ENCODE measurements at regions of chr1 and their contacts with region 1.

Region 1: GRCh38 chr1:209860293-209860881 is 32.6 kb downstream of the UTP25 start:
- DNase-seq: no peak
- H3K4me3 ChIP-seq: no peak overlapping the region
- H3K27ac ChIP-seq: no peak overlapping the region
- H3K27me3 ChIP-seq: no peaks in the 10 kb centered on the region
- CTCF ChIP-seq: peak; percentile 93

Region 2: GRCh38 chr1:209875515-209875914 is 15.1 kb after region 1 on chr1:
- CTCF ChIA-PET with region 1: interaction called, 39 read pairs
- POLR2A ChIA-PET with region 1: no interaction called
- DNase-seq: no peak
- H3K4me3 ChIP-seq: no peak overlapping the region
- H3K27ac ChIP-seq: peak overlapping the region; percentile 41
- H3K27me3 ChIP-seq: no peaks in the 10 kb centered on the region
- CTCF ChIP-seq: peak; percentile 70

Region 3: GRCh38 chr1:209937996-209938959 is 77.9 kb after region 1 on chr1 and contains the start of gene SYT14:
- CTCF ChIA-PET with region 1: interaction called, 13 read pairs
- POLR2A ChIA-PET with region 1: interaction called, 3 read pairs
- DNase-seq: no peak
- H3K4me3 ChIP-seq: peak within 1 kb of the TSS; percentile 72
- H3K27ac ChIP-seq: peak within 1 kb of the TSS; percentile 55
- H3K27me3 ChIP-seq: no peaks in the 10 kb centered on the region
- CTCF ChIP-seq: no peak; the same call in 1 of the 2 replicates
- polyA plus RNA-seq, gene SYT14: 3.7 and 4.8 TPM in 2 replicates

Region 4: DNA sequence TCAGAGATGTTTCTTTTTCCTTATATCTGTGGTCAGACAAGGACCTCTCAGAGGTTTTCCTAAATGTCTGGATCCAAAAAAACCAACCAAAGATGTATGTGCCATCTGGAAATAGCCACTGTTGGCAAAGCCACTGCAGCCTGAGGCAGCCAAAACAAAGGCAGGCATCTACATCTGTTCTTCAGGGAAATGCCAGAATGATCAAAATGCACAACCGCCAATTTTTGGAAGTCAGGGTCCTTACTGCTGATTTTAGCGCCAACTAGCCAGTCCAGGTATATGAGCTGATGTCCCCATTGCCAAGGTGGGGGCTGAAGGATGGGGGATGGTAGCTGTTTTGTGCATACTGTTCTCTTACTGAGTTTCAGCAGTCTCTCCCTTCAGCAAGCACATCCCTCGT is 123.6 kb after region 1 on chr1:
- CTCF ChIA-PET with region 1: interaction called, 253 read pairs
- POLR2A ChIA-PET with region 1: no interaction called
- DNase-seq: no peak
- H3K4me3 ChIP-seq: no peak overlapping the region
- H3K27ac ChIP-seq: no peak overlapping the region
- H3K27me3 ChIP-seq: no peaks in the 10 kb centered on the region
- CTCF ChIP-seq: no peak

Region 5: GRCh38 chr1:209989525-209989924 is 129.1 kb after region 1 on chr1:
- CTCF ChIA-PET with region 1: interaction called, 253 read pairs
- POLR2A ChIA-PET with region 1: no interaction called
- DNase-seq: no peak
- H3K4me3 ChIP-seq: no peak overlapping the region
- H3K27ac ChIP-seq: no peak overlapping the region
- H3K27me3 ChIP-seq: no peaks in the 10 kb centered on the region
- CTCF ChIP-seq: peak; percentile 27; the same call in 1 of the 2 replicates

Region 6: DNA sequence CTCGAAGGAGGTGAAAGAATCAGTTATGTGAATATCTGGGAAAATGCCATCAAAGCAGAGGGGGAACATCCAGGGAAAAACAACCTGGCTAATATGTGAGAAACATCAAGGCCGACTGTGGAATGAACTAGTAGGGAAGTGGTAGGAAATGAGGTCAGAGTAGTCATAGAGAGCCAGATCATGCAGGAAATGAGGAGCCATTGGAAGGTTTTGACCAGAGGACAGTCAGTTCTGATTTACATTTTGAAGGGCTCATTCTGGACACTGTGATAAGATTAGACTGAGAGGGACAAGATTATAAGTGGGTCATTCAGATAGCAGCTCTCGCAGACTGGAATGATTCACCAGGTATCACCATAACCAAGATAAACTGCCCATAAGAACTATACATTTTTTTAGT is 141.4 kb after region 1 on chr1:
- CTCF ChIA-PET with region 1: interaction called, 11 read pairs
- POLR2A ChIA-PET with region 1: no interaction called
- DNase-seq: no peak
- H3K4me3 ChIP-seq: no peak overlapping the region
- H3K27ac ChIP-seq: no peak overlapping the region
- H3K27me3 ChIP-seq: no peaks in the 10 kb centered on the region
- CTCF ChIP-seq: no peak

Measured in AG04450 (cell line).